ENCODE measurements at regions of chr15 and their contacts with region 1.

Region 1: DNA sequence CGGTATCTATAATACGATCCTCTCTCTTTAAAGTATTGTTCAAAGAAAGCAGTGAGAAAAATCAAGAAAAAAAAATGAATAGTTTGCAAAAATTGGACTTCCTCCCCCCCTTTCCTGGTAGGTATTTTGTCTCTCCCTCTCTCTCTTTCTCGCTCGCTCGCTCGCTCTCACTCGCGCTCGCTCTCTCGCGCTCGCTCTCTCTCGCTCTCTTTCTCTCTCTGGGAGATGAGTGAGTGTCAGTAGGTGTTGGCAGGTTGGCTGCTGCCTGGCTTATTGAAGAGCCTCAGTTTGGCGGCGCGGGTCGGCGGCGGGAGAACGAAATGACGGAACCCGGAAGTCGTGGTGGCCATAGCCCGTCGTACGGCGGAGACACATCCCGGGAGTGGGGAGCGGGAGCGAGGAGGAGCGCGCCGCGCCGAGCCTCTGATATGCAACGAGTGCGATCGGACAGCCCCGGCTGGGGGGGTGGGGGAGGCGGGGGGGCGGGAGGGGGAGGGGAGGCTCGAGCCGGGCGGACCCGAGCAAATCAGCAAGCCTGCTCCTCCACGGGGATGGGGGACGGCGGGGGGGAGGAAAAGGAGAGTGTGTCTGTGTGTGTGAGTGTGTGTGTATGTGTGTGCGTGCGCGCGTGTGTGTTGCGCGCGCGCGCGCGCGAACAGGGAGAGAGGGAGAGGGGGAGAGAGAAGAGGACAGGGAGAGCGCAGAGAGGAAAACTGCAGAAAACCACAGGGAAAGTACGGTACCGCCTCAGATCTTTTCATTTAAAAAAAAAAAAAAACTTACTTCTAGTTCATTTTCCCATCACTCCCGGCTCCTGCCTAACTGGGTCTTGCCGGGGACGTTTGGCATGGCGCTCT is at the start of gene MEIS2:
- DNase-seq: peak; percentile 97
- H3K4me3 ChIP-seq: peak within 1 kb of the TSS; percentile 74 to 92
- H3K27ac ChIP-seq: peak within 1 kb of the TSS; percentile 99
- H3K4me1 ChIP-seq: no peaks in the 10 kb centered on the region
- H3K27me3 ChIP-seq: no peaks in the 10 kb centered on the region
- CTCF ChIP-seq: no peak
- EP300 ChIP-seq: peak in 1 of 2 experiments; percentile 46; a peak in 2 of 4 replicates
- RAD21 ChIP-seq: no peak
- polyA plus RNA-seq, gene MEIS2: 120 and 146 TPM in 2 replicates

Region 2: DNA sequence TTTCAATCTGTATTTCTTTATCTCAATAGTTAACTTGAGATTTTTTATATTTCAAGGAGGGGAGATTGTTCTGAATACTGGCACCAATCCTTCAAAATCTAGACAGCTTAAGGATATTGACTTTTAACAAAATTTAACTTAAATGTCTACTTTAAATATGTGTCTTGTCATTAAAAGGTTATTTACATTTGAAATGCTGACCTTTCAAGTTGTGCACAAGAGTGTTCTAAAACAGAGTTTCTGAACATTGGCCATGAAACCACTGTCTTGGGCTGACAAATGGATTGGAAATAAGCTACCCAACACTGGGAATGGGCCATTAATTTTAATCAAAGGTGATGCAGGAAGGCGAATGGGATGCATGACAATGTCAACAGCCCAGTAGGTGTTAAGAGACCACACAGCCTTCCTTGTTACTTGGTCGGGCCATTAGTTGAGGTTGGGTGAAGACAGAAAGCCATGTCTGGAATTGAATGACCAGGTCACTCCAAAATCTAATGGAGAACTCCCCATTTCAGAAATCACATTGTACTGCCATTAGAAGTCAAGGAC is 392.4 kb before region 1 on chr15:
- CTCF ChIA-PET with region 1: no interaction called
- POLR2A ChIA-PET with region 1: no interaction called
- DNase-seq: no peak
- H3K4me3 ChIP-seq: no peak overlapping the region
- H3K27ac ChIP-seq: no peak overlapping the region
- H3K4me1 ChIP-seq: no peaks in the 10 kb centered on the region
- H3K27me3 ChIP-seq: no peaks in the 10 kb centered on the region
- CTCF ChIP-seq: no peak
- EP300 ChIP-seq: no peak
- RAD21 ChIP-seq: no peak

Region 3: DNA sequence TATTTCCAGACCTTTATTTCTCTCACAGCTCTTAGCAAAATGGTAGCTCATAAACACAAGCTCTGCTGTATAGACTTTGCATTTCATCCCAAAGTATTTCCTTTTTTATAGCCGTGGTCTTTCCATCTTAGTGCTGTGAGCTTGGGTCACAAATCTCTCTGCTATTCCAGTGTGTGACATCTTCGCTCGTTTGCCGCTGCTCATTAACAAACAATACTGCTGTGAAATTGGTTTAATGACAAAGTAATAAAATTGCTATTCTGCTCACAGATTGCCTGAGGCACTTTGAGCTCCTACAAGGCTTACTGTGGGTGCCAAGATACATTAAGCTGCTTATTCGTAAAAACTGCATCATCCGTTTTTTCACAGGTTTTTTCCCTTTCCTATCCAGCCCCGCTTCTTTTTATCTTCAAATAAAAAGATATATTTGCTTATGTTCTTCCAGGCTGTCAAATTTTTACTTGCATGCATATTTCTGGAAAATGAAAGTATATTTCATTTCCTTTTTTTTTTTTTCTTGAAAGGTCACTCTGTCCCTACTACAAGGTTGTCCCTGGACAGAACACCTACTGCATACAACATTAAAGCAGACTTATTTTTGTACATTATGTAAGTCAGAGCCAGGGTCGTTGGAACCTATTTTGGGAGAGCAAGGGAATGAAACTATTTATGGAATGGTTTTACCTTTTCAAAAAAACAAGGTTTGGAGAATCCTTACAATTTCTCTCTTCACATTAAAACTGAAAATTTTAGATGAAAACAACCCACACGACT is 174.5 kb before region 1 on chr15:
- CTCF ChIA-PET with region 1: no interaction called
- POLR2A ChIA-PET with region 1: no interaction called
- DNase-seq: no peak
- H3K4me3 ChIP-seq: no peak overlapping the region
- H3K27ac ChIP-seq: peak overlapping the region in 1 of 2 experiments; percentile 29; a peak in 2 of 4 replicates
- H3K4me1 ChIP-seq: peaks cover 9 to 36% of the 10 kb centered on the region in 2 experiments; a peak in 3 of 4 replicates
- H3K27me3 ChIP-seq: no peaks in the 10 kb centered on the region
- CTCF ChIP-seq: no peak
- EP300 ChIP-seq: no peak
- RAD21 ChIP-seq: no peak

Region 4: GRCh38 chr15:37084602-37085001 is 15.7 kb before region 1 on chr15:
- CTCF ChIA-PET with region 1: interaction called, 7 read pairs
- POLR2A ChIA-PET with region 1: interaction called, 16 read pairs
- DNase-seq: no peak
- H3K4me3 ChIP-seq: no peak overlapping the region; a peak in 1 of 4 replicates
- H3K27ac ChIP-seq: peak overlapping the region; percentile 55 to 61; a peak in 3 of 4 replicates
- H3K4me1 ChIP-seq: peaks cover 25 to 76% of the 10 kb centered on the region in 2 experiments; a peak in 3 of 4 replicates
- H3K27me3 ChIP-seq: no peaks in the 10 kb centered on the region
- CTCF ChIP-seq: no peak
- EP300 ChIP-seq: no peak
- RAD21 ChIP-seq: no peak

Region 5: GRCh38 chr15:37134699-37135131 is 34.4 kb after region 1 on chr15:
- CTCF ChIA-PET with region 1: interaction called, 101 read pairs
- POLR2A ChIA-PET with region 1: interaction called, 8 read pairs
- DNase-seq: no peak
- H3K4me3 ChIP-seq: no peak overlapping the region
- H3K27ac ChIP-seq: peak overlapping the region in 1 of 2 experiments; percentile 97; a peak in 2 of 4 replicates
- H3K4me1 ChIP-seq: peaks cover 5 to 44% of the 10 kb centered on the region in 2 experiments; a peak in 2 of 4 replicates
- H3K27me3 ChIP-seq: no peaks in the 10 kb centered on the region
- CTCF ChIP-seq: peak; percentile 83
- EP300 ChIP-seq: 0 out of 4 replicates have a peak, but pooled peaks of 1 of the 2 experiments have one; percentile 26
- RAD21 ChIP-seq: peak; percentile 57; the same call in 1 of the 2 replicates

Region 6: DNA sequence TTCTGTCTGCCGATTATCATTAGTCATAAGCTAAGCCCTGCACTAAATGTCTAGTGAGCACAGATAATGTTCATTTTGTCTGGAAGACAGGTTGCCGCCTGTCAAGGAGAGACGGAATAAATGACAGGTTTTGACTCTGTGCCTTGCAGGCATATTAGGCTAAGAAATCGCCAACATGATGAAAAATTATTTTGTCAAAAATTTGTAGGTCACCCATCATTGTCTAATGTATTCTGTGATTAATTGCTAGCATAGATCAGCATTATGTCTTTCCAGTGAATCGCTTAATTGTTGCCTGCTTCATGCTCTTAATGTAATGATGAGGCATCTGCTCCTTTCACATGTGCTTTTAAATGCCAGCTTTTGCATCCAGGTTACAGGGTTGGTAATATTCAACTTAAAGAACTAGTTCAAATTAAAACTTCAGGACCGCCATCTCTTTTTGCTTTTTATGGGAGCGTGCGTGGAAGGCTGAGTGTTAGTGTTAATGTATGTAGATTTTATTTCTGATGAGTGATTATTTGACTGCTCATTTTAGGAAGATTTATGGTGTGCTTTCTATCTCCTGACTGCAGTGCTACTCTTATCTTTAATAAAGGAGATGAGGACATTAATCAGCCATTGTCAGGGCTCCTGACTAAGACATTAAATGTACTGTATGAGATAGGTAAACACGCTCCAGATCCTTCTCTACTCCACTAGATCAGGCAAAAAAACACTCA is 120.8 kb after region 1 on chr15:
- CTCF ChIA-PET with region 1: interaction called, 3 read pairs
- POLR2A ChIA-PET with region 1: interaction called, 12 read pairs
- DNase-seq: peak; percentile 18
- H3K4me3 ChIP-seq: peak overlapping the region; percentile 11 to 35; a peak in 2 of 4 replicates
- H3K27ac ChIP-seq: peak overlapping the region; percentile 36 to 100; a peak in 3 of 4 replicates
- H3K4me1 ChIP-seq: peaks cover 3 to 40% of the 10 kb centered on the region in 2 experiments; a peak in 2 of 4 replicates
- H3K27me3 ChIP-seq: no peaks in the 10 kb centered on the region
- CTCF ChIP-seq: no peak
- EP300 ChIP-seq: peak; percentile 19 to 97
- RAD21 ChIP-seq: peak; percentile 12; the same call in 1 of the 2 replicates

Measured in SK-N-SH (cell line).